ENCODE measurements at regions of chr12 and their contacts with region 1.

Region 1: GRCh38 chr12:124044809-124045321 is 71.8 kb downstream of the ZNF664 start:
- DNase-seq: peak in 1 of 10 donors; percentile 59
- H3K4me3 ChIP-seq: no peak overlapping the region
- H3K27ac ChIP-seq: peak overlapping the region in 20 of 59 donors; percentile 76 to 95 (median 90)
- H3K27me3 ChIP-seq: no peaks in the 10 kb centered on the region
- CTCF ChIP-seq: no peak

Region 2: GRCh38 chr12:124578445-124578844 is 533.6 kb after region 1 on chr12:
- intact Hi-C with region 1: loop called in 1 of 2 experiments (anchors 10 kb)
- DNase-seq: no peak
- H3K4me3 ChIP-seq: no peak overlapping the region
- H3K27ac ChIP-seq: no peak overlapping the region
- H3K27me3 ChIP-seq: no peaks in the 10 kb centered on the region
- CTCF ChIP-seq: no peak